ENCODE measurements at regions of chrX and their contacts with region 1.

Region 1: GRCh38 chrX:73262992-73263391 is 48.3 kb upstream of the NAP1L2 start:
- DNase-seq: no peak
- H3K4me3 ChIP-seq: no peak overlapping the region
- H3K27ac ChIP-seq: no peak overlapping the region
- H3K4me1 ChIP-seq: no peaks in the 10 kb centered on the region
- H3K27me3 ChIP-seq: no peaks in the 10 kb centered on the region
- CTCF ChIP-seq: peak; percentile 10 to 35 (median 26)
- EP300 ChIP-seq: no peak
- POLR2A ChIP-seq: no peak

Region 2: DNA sequence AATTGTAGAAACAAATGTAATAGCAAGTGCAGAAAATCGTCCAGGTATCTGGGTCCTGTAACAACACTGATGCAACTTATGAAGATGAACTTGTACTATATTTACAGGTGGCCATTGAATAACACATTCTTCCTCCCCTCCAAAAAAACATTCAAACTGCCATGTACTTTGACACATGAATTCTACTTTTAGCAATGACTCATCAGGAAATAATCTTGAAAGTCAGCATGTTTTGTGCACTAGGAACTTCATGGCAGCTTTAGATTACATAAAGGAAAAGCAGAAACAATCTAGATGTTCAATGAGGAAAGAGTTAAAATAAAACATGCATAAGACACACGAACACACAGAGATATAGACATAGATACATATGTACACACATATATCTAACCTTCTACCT is 186.2 kb before region 1 on chrX:
- in situ Hi-C with region 1: loop called in 1 of 4 experiments (anchors 25 kb)
- intact Hi-C with region 1: no loop called
- DNase-seq: no peak
- H3K4me3 ChIP-seq: no peak overlapping the region
- H3K27ac ChIP-seq: no peak overlapping the region
- H3K4me1 ChIP-seq: no peaks in the 10 kb centered on the region
- H3K27me3 ChIP-seq: peaks cover 12% of the 10 kb centered on the region
- CTCF ChIP-seq: no peak
- EP300 ChIP-seq: no peak
- POLR2A ChIP-seq: no peak

Region 3: GRCh38 chrX:73182502-73183114 is 80.4 kb before region 1 on chrX:
- in situ Hi-C with region 1: no loop called
- intact Hi-C with region 1: no loop called
- DNase-seq: no peak
- H3K4me3 ChIP-seq: no peak overlapping the region
- H3K27ac ChIP-seq: no peak overlapping the region
- H3K4me1 ChIP-seq: no peaks in the 10 kb centered on the region
- H3K27me3 ChIP-seq: no peaks in the 10 kb centered on the region
- CTCF ChIP-seq: no peak
- EP300 ChIP-seq: no peak
- POLR2A ChIP-seq: no peak

Measured in transverse colon (tissue), 4 donors.